ENCODE measurements at regions of chr19 and their contacts with region 1.

Region 1: GRCh38 chr19:47483800-47484690 is at the start of gene KPTN:
- DNase-seq: peak; percentile 96 to 99
- ATAC-seq: peak; percentile 84 to 90
- H3K4me3 ChIP-seq: peak within 1 kb of the TSS; percentile 53
- H3K27ac ChIP-seq: peak within 1 kb of the TSS; percentile 96 to 97
- H3K4me1 ChIP-seq: peaks cover 12% of the 10 kb centered on the region; the same call in 2 of the 3 replicates
- CTCF ChIP-seq: peak; percentile 98
- EP300 ChIP-seq: no peak
- POLR2A ChIP-seq: peak; percentile 88
- RAD21 ChIP-seq: peak; percentile 70 to 75
- polyA plus RNA-seq, gene KPTN: 10.6 and 12.5 TPM in 2 replicates

Region 2: DNA sequence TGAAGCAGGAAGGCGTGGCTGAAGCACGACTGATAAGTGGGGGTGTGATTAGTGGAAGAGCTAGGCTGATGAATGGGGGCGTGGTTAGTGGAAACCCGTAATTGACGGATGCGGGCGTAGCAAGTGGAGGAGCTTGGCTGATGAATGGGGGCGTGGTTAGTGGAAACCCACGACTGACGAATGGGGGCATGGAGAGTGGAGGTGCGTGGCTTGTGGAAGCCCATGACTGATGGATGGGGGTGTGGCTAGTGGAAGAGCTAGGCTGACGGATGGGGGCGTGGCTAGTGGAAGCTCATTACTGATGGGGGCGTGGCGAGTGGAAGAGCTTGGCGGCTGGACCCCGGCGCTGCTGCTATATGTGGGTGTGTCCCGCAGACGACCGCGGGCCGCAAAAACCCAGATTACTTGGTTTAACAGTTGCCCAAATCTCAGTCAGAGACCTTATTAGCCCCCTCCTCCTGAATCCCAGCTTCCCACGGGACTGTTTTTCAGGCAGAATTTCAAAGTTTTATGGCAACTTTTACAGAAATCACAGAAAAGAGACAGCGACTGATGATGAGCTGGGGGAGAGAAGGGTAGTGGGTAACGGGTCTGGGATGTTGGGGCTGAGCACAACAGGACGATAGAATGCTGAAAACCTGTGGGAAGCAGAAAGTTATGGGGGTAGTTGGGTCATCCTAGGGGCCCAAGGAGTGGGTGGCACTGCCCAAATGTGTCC is 55.7 kb before region 1 on chr19:
- CTCF ChIA-PET with region 1: interaction called, 84 read pairs
- POLR2A ChIA-PET with region 1: no interaction called
- DNase-seq: peak; percentile 95 to 98
- ATAC-seq: peak; percentile 75 to 85
- H3K4me3 ChIP-seq: peak overlapping the region; percentile 42
- H3K27ac ChIP-seq: peak overlapping the region in 1 of 2 experiments; percentile 43; a peak in 2 of 6 replicates
- H3K4me1 ChIP-seq: peaks cover 20% of the 10 kb centered on the region
- CTCF ChIP-seq: no peak
- EP300 ChIP-seq: no peak
- POLR2A ChIP-seq: no peak
- RAD21 ChIP-seq: no peak

Region 3: GRCh38 chr19:47464675-47465419 is 19.2 kb before region 1 on chr19:
- CTCF ChIA-PET with region 1: interaction called, 31 read pairs
- POLR2A ChIA-PET with region 1: interaction called, 3 read pairs
- DNase-seq: no peak
- ATAC-seq: no peak
- H3K4me3 ChIP-seq: no peak overlapping the region
- H3K27ac ChIP-seq: no peak overlapping the region
- H3K4me1 ChIP-seq: peaks cover 7% of the 10 kb centered on the region; the same call in 1 of the 3 replicates
- CTCF ChIP-seq: no peak
- EP300 ChIP-seq: no peak
- POLR2A ChIP-seq: no peak
- RAD21 ChIP-seq: no peak

Region 4: DNA sequence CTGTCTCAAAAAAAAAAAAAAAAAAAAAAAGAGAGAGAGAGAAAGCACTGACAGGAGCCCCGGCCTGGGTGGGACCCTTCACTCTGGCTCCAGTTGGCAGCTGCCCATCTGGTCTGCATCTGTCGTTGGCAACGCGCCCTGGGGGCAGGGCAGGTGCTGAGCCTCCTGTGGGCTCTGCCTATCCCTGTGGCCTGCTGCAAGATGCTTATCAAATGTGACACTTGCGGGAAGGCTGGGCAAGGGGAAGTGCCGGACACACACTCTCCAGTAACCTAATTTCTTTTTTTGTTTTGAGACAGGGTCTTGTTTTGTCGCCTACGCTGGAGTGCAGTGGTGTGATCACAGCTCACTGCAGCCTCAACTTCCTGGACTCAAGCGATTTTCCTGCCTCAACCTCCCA is 10.7 kb after region 1 on chr19:
- CTCF ChIA-PET with region 1: interaction called, 58 read pairs
- POLR2A ChIA-PET with region 1: interaction called, 3 read pairs
- DNase-seq: no peak
- ATAC-seq: no peak
- H3K4me3 ChIP-seq: no peak overlapping the region
- H3K27ac ChIP-seq: no peak overlapping the region
- H3K4me1 ChIP-seq: no peaks in the 10 kb centered on the region
- CTCF ChIP-seq: no peak
- EP300 ChIP-seq: no peak
- POLR2A ChIP-seq: no peak
- RAD21 ChIP-seq: no peak

Region 5: GRCh38 chr19:47510008-47510407 is 26.0 kb after region 1 on chr19:
- CTCF ChIA-PET with region 1: interaction called, 30 read pairs
- POLR2A ChIA-PET with region 1: interaction called, 13 read pairs
- DNase-seq: no peak
- ATAC-seq: no peak
- H3K4me3 ChIP-seq: no peak overlapping the region
- H3K27ac ChIP-seq: no peak overlapping the region
- H3K4me1 ChIP-seq: peaks cover 22% of the 10 kb centered on the region
- CTCF ChIP-seq: no peak
- EP300 ChIP-seq: no peak
- POLR2A ChIP-seq: no peak
- RAD21 ChIP-seq: no peak

Region 6: DNA sequence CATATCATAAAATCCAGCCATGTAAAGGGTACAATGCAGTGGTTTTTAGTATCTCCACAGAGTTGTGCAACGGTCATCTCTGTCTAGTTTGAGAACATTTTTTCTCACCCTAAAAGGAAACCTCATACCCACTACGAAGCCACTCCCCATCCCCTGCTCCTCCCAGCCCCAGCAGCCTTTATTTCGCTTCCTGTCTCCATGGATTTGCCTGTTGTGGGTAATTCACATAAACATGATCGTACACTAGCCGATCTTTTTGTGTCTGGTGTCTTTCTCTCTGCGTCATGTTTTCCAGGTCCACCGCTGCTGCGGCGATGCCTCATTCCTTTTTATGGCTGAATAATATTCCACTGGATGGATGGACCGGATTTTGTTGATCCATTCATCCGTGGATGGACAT is 153.5 kb after region 1 on chr19:
- CTCF ChIA-PET with region 1: no interaction called
- POLR2A ChIA-PET with region 1: no interaction called
- DNase-seq: no peak
- ATAC-seq: no peak
- H3K4me3 ChIP-seq: no peak overlapping the region
- H3K27ac ChIP-seq: no peak overlapping the region
- H3K4me1 ChIP-seq: peaks cover 7% of the 10 kb centered on the region; the same call in 1 of the 3 replicates
- CTCF ChIP-seq: no peak
- EP300 ChIP-seq: no peak
- POLR2A ChIP-seq: no peak
- RAD21 ChIP-seq: no peak

Measured in A549 (cell line).